ENCODE measurements at regions of chr18 and their contacts with region 1.

Region 1: GRCh38 chr18:6543330-6543908 is 128.7 kb upstream of the L3MBTL4 start:
- DNase-seq: no peak
- H3K4me3 ChIP-seq: no peak overlapping the region
- H3K27ac ChIP-seq: no peak overlapping the region
- H3K4me1 ChIP-seq: peaks cover 5% of the 10 kb centered on the region
- H3K27me3 ChIP-seq: no peaks in the 10 kb centered on the region
- CTCF ChIP-seq: peak; percentile 42 to 63 (median 61)
- EP300 ChIP-seq: no peak
- POLR2A ChIP-seq: no peak

Region 2: GRCh38 chr18:6427286-6427685 is 116.1 kb before region 1 on chr18:
- intact Hi-C with region 1: no loop called
- DNase-seq: peak in 1 of 5 donors; percentile 17
- H3K4me3 ChIP-seq: no peak overlapping the region
- H3K27ac ChIP-seq: no peak overlapping the region
- H3K4me1 ChIP-seq: no peaks in the 10 kb centered on the region
- H3K27me3 ChIP-seq: no peaks in the 10 kb centered on the region
- CTCF ChIP-seq: no peak
- EP300 ChIP-seq: no peak
- POLR2A ChIP-seq: no peak

Region 3: GRCh38 chr18:6666012-6666685 is 122.7 kb after region 1 on chr18:
- intact Hi-C with region 1: loop called in 1 of 4 experiments (anchors 5 kb)
- DNase-seq: no peak
- H3K4me3 ChIP-seq: no peak overlapping the region
- H3K27ac ChIP-seq: no peak overlapping the region
- H3K4me1 ChIP-seq: no peaks in the 10 kb centered on the region
- H3K27me3 ChIP-seq: no peaks in the 10 kb centered on the region
- CTCF ChIP-seq: no peak
- EP300 ChIP-seq: no peak
- POLR2A ChIP-seq: no peak

Region 4: GRCh38 chr18:6878556-6879297 is 335.3 kb after region 1 on chr18:
- intact Hi-C with region 1: loop called in 1 of 4 experiments (anchors 5 kb)
- DNase-seq: peak in 2 of 5 donors; percentile 30 to 33
- H3K4me3 ChIP-seq: no peak overlapping the region
- H3K27ac ChIP-seq: no peak overlapping the region
- H3K4me1 ChIP-seq: peaks cover 5% of the 10 kb centered on the region
- H3K27me3 ChIP-seq: no peaks in the 10 kb centered on the region
- CTCF ChIP-seq: no peak
- EP300 ChIP-seq: no peak
- POLR2A ChIP-seq: no peak

Measured in ovary (tissue), 10 donors.